Dorsolateral prefrontal cortex (tissue), 120 donors: ENCODE measurements at regions of chr4 and their contacts with region 1.

Region 1: GRCh38 chr4:88514557-88515511 is 8.7 kb downstream of the PYURF start:
- DNase-seq: no peak
- H3K4me3 ChIP-seq: peak overlapping the region in 22 of 59 donors; percentile 3 to 46 (median 23)
- H3K27ac ChIP-seq: peak overlapping the region in 1 of 59 donors; percentile 68
- H3K27me3 ChIP-seq: no peaks in the 10 kb centered on the region
- CTCF ChIP-seq: no peak

Region 2: GRCh38 chr4:88043001-88043400 is 471.8 kb before region 1 on chr4:
- intact Hi-C with region 1: loop called in 1 of 2 experiments (anchors 10 kb)
- DNase-seq: no peak
- H3K4me3 ChIP-seq: no peak overlapping the region
- H3K27ac ChIP-seq: peak overlapping the region in 3 of 59 donors; percentile 13 to 35 (median 16)
- H3K27me3 ChIP-seq: no peaks in the 10 kb centered on the region
- CTCF ChIP-seq: no peak

Region 3: DNA sequence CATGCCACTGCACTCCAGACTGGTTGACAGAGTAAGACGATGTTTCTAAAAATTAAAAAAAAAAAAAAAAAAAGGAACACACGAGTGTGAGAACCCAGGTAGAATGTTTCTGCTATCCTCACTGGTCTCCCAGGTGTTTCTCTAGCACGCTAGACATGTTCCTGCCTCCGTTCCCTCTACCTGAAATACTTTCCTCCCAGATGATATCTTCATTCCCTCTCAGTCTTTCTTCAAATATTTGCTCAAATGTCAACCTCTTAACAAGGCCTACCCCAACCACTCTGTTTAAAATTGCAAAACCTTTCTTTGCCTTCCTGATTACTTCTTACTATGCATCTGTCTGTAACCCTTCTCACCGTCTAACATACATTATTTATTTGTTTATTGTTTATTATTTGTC is 296.9 kb before region 1 on chr4:
- intact Hi-C with region 1: loop called (anchors 1 to 2 kb)
- DNase-seq: no peak
- H3K4me3 ChIP-seq: no peak overlapping the region
- H3K27ac ChIP-seq: no peak overlapping the region
- H3K27me3 ChIP-seq: no peaks in the 10 kb centered on the region
- CTCF ChIP-seq: no peak

Region 4: GRCh38 chr4:88341227-88342192 is 173.3 kb before region 1 on chr4:
- intact Hi-C with region 1: no loop called
- DNase-seq: peak in 6 of 10 donors; percentile 7 to 70 (median 48)
- H3K4me3 ChIP-seq: no peak overlapping the region
- H3K27ac ChIP-seq: peak overlapping the region in 49 of 59 donors; percentile 8 to 84 (median 62)
- H3K27me3 ChIP-seq: no peaks in the 10 kb centered on the region
- CTCF ChIP-seq: no peak

Region 5: DNA sequence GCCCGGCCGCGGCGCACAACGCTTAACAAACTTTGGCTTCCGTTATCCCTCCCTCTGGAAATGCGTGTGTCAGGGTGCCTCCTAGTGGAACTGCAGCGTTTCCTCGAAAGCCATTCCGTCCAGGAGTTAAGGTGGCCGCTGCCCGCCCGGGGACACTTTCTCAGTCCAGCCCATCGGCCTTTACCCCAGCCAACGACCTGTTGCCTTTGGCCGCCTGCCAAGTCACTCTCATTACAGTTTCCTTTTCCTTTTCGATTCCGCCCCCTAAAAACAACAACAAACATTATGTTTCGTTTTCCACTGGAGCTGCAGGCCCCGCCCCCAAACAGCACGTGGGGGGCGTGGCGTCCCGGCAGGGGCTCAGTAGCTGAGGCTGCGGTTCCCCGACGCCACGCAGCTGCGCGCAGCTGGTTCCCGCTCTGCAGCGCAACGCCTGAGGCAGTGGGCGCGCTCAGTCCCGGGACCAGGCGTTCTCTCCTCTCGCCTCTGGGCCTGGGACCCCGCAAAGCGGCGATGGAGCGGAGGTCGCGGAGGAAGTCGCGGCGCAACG is 58.0 kb before region 1 on chr4 and contains the start of gene HERC5:
- intact Hi-C with region 1: loop called in 1 of 2 experiments (anchors 5 kb)
- DNase-seq: peak; percentile 22 to 79 (median 74)
- H3K4me3 ChIP-seq: peak within 1 kb of the TSS; percentile 47 to 90 (median 75)
- H3K27ac ChIP-seq: peak within 1 kb of the TSS in 53 of 59 donors; percentile 0 to 86 (median 64)
- H3K27me3 ChIP-seq: peaks cover 0 to 7% (median 0%) of the 10 kb centered on the region in 45 donors
- CTCF ChIP-seq: peak; percentile 53 to 85 (median 70)
- total RNA-seq, gene HERC5: 1.6 to 17.3 (median 4.0) TPM